Activated CD8-positive, alpha-beta T cell treated with anti-CD3 and anti-CD28 coated beads for 36 hours (primary cell): ENCODE measurements at regions of chr3 and their contacts with region 1.

Region 1: DNA sequence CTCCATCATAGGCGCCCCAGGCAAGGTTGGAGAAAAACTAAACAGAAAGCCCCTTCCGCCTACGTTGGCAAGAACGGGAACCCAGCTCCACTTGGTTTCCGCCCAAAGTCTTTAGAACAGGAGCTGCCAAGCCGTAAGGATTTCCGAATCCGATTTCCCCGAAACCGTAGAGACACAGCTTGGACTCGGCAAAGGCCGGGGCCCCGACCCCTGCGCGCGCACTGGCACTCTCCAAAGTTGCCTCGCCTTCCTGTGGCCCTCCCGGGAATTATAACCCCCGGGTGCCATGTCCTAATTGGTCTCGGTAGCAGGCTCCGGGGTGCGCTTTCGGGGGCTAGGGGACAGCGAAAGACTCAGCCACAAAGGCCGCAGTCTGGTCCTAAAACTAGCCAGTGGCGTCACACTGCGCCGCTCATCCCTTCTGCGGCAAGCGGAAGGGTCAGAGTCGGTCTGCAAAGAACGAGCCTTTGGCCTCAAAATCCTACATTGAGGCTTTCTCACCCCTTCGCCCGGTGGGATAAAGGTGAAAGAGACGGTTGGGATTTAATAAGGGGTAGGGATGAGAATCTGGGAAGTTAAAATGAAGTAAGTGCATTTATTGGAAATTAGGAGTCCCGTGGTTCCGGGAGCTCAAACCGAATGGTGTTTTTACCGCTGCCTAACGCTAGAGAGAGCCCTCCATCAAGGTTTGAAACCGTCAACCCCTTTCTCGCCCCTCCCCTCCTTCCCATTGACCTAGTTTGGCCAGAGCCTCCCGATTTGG is 6.8 kb downstream of the BCL6 start:
- DNase-seq: peak; percentile 82
- ATAC-seq: peak; percentile 50
- H3K4me3 Mint-ChIP-seq: peak overlapping the region; percentile 93
- H3K27ac Mint-ChIP-seq: peak overlapping the region; percentile 98
- H3K4me1 Mint-ChIP-seq: peaks cover 47% of the 10 kb centered on the region
- H3K27me3 Mint-ChIP-seq: no peaks in the 10 kb centered on the region
- CTCF ChIP-seq: peak; percentile 79

Region 2: DNA sequence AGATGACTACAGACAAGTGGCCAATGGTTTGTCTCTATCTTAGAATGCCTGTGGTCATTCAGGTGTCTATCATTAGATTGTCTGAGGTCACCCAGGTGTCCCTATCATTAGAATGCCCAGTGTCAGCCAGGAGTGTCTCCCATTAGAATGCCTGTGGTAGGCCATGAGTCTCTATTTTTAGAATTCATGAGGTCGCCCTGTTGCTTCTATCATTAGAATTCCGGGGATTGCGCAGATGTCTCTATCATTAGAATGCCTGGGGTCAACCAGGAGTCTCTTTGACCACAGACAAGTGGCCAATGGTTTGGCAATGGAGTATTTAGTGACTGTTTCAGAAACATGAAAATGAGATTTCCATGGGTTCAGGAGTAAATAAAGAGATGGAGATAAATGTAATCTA is 43.7 kb before region 1 on chr3:
- CTCF ChIA-PET with region 1: no interaction called
- POLR2A ChIA-PET with region 1: no interaction called
- intact Hi-C with region 1: no loop called
- DNase-seq: no peak
- ATAC-seq: no peak
- H3K4me3 Mint-ChIP-seq: no peak overlapping the region
- H3K27ac Mint-ChIP-seq: no peak overlapping the region
- H3K4me1 Mint-ChIP-seq: no peaks in the 10 kb centered on the region
- H3K27me3 Mint-ChIP-seq: peaks cover 18% of the 10 kb centered on the region
- CTCF ChIP-seq: no peak

Region 3: GRCh38 chr3:187929112-187929816 is 190.8 kb after region 1 on chr3:
- CTCF ChIA-PET with region 1: interaction called, 32 read pairs
- POLR2A ChIA-PET with region 1: interaction called, 3 read pairs
- intact Hi-C with region 1: no loop called
- DNase-seq: peak; percentile 57
- ATAC-seq: peak; percentile 85
- H3K4me3 Mint-ChIP-seq: no peak overlapping the region
- H3K27ac Mint-ChIP-seq: peak overlapping the region; percentile 67
- H3K4me1 Mint-ChIP-seq: peaks cover 45% of the 10 kb centered on the region
- H3K27me3 Mint-ChIP-seq: no peaks in the 10 kb centered on the region
- CTCF ChIP-seq: no peak

Region 4: GRCh38 chr3:188082031-188082430 is 343.5 kb after region 1 on chr3:
- CTCF ChIA-PET with region 1: interaction called, 12 read pairs
- POLR2A ChIA-PET with region 1: no interaction called
- intact Hi-C with region 1: no loop called
- DNase-seq: no peak
- ATAC-seq: no peak
- H3K4me3 Mint-ChIP-seq: no peak overlapping the region
- H3K27ac Mint-ChIP-seq: no peak overlapping the region
- H3K4me1 Mint-ChIP-seq: peaks cover 7% of the 10 kb centered on the region
- H3K27me3 Mint-ChIP-seq: peaks cover 1% of the 10 kb centered on the region
- CTCF ChIP-seq: no peak

Region 5: DNA sequence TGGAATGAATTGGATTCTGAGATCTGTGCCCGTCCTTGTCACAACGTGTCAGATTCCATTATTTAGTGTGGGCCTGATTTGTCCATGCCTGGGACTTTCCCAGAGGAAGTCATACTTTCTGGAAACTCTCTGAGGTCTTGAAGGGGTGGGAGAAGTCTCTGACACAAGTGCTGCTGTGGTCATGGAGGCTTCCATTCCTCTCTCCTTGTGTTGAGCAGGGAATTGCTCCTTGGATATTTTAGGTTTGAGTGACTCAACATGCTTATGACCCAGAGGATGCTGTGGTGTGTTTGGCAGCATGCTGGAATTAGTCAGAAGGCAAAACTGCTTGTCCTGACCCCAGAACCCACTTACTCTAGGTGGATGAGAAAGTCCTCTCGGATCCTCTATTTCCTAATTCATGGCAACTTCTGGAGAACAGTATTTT is 547.6 kb after region 1 on chr3:
- CTCF ChIA-PET with region 1: interaction called, 59 read pairs
- POLR2A ChIA-PET with region 1: interaction called, 10 read pairs
- intact Hi-C with region 1: loop called (anchors 10 kb)
- DNase-seq: no peak
- ATAC-seq: no peak
- H3K4me3 Mint-ChIP-seq: no peak overlapping the region
- H3K27ac Mint-ChIP-seq: peak overlapping the region; percentile 32
- H3K4me1 Mint-ChIP-seq: peaks cover 53% of the 10 kb centered on the region
- H3K27me3 Mint-ChIP-seq: no peaks in the 10 kb centered on the region
- CTCF ChIP-seq: no peak

Region 6: DNA sequence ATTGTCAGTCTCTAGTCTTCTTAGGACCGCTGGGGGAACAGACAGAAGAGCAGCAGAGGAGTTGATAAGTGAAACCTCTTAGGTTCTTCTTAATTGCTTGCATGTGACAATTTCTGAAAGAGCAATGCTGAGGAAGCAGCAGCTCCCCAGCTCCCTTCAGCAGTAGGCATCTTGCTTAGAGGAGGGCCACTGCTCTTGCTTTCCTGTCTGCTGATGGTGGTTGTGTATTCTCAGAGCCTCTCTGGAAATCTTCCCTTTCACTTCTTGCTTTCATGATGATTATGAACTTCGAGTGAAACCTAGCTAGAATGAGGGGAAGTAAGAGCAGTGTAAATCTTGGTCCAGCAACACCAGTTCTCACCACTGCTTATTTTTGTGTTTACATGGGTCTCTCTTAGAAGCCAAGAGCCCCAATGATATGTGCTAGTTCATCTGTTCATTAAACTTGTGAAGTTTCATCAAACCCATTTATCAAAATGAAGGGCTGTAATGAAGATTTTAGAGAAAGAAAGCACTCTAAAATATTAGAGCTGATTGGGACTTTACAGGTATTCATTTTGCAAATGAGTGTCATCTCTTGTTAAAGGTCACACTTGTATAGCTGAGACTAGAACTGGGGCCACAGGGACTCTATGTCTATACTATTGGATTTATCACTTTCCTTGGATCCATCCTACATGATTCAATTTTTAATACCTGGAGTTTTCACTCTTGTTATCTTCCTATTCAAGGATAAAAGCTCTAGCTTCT is 662.2 kb after region 1 on chr3:
- CTCF ChIA-PET with region 1: interaction called, 24 read pairs
- POLR2A ChIA-PET with region 1: interaction called, 4 read pairs
- intact Hi-C with region 1: loop called (anchors 10 kb)
- DNase-seq: peak; percentile 51
- ATAC-seq: peak; percentile 83
- H3K4me3 Mint-ChIP-seq: no peak overlapping the region
- H3K27ac Mint-ChIP-seq: peak overlapping the region; percentile 71
- H3K4me1 Mint-ChIP-seq: peaks cover 67% of the 10 kb centered on the region
- H3K27me3 Mint-ChIP-seq: no peaks in the 10 kb centered on the region
- CTCF ChIP-seq: no peak

Region 7: DNA sequence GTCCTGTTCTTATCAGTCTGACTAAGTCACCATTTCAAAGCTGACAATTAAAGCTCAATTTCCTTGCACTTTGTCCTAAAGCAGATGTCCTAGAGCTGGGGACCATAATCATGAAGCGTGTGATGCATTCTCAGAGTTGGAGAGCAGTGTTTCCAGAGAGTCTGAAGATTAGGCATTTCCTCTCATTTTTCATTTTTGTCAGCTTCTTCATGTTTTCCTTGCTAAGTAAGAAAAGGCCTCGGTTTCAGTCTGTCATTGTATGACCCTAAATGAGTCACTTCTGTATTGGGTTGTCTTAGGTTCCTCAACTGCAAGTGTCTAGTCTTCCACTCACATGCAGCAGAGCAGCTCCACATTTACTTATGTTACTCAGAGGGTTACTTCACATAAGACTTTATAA is 1176.0 kb after region 1 on chr3:
- CTCF ChIA-PET with region 1: interaction called, 46 read pairs
- POLR2A ChIA-PET with region 1: interaction called, 6 read pairs
- intact Hi-C with region 1: no loop called
- DNase-seq: peak; percentile 41
- ATAC-seq: peak; percentile 76
- H3K4me3 Mint-ChIP-seq: no peak overlapping the region
- H3K27ac Mint-ChIP-seq: peak overlapping the region; percentile 87
- H3K4me1 Mint-ChIP-seq: peaks cover 42% of the 10 kb centered on the region
- H3K27me3 Mint-ChIP-seq: no peaks in the 10 kb centered on the region
- CTCF ChIP-seq: no peak